Endothelial cell of umbilical vein (primary cell): ENCODE measurements at regions of chr22 and their contacts with region 1.

Region 1: DNA sequence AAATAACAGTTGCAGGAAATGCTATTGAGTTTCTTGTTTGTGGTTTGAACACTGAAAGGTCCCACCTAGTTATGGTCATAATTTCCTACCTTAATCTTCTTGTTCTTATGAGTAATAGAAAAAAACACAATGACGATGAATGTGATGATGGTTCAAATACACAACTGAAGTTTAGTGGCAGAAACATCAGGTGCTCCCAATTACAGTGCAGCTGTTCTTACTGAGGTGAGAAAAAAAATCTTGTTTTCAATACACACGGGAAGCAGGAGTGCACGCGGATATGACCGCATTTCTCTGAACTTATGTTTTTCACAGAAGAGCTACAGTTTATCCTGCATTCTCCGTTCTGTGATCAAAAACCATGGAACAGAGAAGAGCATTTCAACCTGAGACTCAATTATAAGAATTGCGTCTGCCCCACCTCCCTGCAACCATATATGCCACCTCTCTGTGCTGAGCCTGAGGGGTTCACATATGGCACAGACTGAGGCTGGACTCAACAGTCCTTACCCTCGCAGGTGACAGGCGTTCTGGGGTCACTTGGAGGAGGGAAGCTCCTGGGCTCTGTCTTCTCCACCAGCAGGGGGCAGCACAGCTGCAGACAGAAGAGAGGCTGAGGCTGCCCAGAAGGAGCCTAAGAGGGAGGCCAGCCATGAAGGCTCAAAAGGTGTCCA is 99.7 kb upstream of the IGLL5 start:
- DNase-seq: peak; percentile 34
- H3K4me3 ChIP-seq: no peak overlapping the region
- H3K27ac ChIP-seq: no peak overlapping the region
- H3K4me1 ChIP-seq: no peaks in the 10 kb centered on the region
- H3K27me3 ChIP-seq: peaks cover 0 to 5% of the 10 kb centered on the region in 2 experiments
- CTCF ChIP-seq: peak; percentile 80 to 91
- POLR2A ChIP-seq: no peak

Region 2: DNA sequence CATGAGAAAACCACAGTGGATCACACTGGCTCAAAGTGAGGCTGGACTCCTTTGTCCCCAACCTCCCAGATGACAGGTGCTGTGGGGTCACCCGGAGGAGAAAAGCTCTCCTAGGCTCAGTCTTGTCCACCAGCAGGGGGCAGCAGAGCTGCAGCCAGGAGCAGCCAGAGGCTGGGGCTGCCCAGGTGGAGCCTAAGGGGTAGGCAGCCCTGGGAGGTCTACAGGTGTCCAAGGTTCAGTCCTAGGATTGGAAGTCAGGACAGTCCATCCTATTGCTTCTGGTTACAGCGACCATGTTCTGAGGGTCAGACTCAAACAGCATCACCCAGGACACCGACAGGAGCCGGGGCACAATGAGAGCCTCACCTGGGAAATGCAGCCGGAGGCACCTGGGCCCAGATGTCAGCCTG is 22.1 kb after region 1 on chr22:
- CTCF ChIA-PET with region 1: interaction called, 13 read pairs
- POLR2A ChIA-PET with region 1: no interaction called
- dilution Hi-C with region 1: no loop called
- intact Hi-C with region 1: no loop called
- DNase-seq: peak; percentile 7
- H3K4me3 ChIP-seq: no peak overlapping the region
- H3K27ac ChIP-seq: no peak overlapping the region
- H3K4me1 ChIP-seq: no peaks in the 10 kb centered on the region
- H3K27me3 ChIP-seq: peaks cover 8 to 16% of the 10 kb centered on the region in 2 experiments
- CTCF ChIP-seq: peak; percentile 80 to 82
- POLR2A ChIP-seq: no peak